Activated B cell treated with CpG ODN at 0.5 μM for 24 hours (primary cell): ENCODE measurements at regions of chr11 and their contacts with region 1.

Region 1: DNA sequence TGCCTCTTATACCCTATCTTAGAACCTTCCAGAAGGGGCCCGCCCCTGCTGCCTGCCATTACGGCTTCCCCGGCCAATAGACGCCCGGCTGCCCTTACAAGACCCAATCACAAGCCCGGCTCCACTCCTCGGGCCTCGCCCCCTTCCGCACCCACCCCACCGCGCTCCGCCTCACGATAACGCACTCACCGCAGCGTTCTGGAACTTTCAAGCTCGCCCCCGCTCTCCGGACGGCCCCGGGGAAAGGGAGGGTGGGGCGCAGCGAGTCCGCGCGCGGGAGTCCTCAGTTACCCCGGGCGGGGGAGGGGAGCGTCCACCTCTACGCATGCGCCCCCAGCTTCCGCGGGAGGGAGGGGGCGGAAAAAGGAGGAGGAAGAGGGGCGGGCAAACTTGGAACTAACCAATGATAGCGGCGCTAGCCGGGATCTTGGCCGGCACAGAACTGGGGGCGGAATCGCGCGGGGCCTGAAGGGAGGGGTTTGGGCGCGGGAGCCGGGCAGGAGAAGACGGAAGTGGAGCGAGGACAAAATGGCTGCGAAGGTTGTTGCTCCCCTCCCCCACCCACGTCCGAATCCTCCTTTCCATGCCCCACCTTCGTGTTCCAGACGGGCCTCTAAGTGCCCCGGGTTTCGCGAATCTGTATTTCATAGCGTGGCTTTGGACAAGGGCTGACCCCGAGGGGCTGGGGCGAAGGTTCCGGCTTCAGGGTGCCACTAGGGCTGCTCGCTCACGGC is 389 bp upstream of the HSPA8 start:
- DNase-seq: peak; percentile 98
- ATAC-seq: peak; percentile 82
- H3K4me3 Mint-ChIP-seq: peak overlapping the region; percentile 97
- H3K27ac Mint-ChIP-seq: peak overlapping the region; percentile 100
- H3K4me1 Mint-ChIP-seq: peaks cover 69% of the 10 kb centered on the region
- H3K27me3 Mint-ChIP-seq: no peaks in the 10 kb centered on the region
- CTCF ChIP-seq: no peak

Region 2: DNA sequence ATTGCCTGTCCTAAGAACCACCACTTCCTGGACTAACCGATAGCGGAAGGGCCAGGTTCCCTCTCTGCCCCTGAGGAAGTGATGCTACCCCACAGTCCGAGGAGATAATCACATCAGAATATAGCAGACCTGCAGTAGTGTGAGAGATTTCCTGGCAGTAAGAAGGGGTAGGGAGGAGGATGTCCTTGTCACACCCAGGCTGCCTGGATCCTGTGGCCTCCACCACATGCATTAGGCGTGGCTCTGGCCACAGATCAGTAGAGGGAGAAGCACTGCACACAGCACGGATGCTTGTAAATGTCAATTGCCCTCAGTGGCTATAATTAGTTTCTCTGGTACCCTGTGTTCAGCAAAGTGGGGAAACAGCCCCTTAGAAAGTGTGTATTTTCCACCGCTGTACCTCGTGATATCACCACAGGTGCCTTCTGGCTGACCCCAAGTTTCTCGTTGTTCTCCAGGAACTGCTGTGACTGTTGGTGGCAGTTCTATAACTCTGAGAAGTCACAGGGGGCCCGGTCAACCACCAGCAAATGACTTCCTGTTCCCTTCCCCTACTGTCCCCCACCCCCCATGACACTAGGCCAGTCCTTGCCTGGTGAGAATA is 345.0 kb before region 1 on chr11:
- CTCF ChIA-PET with region 1: no interaction called
- POLR2A ChIA-PET with region 1: interaction called, 7 read pairs
- intact Hi-C with region 1: loop called (anchors 10 kb)
- DNase-seq: peak; percentile 38
- ATAC-seq: peak; percentile 69
- H3K4me3 Mint-ChIP-seq: peak overlapping the region; percentile 47
- H3K27ac Mint-ChIP-seq: peak overlapping the region; percentile 80
- H3K4me1 Mint-ChIP-seq: peaks cover 83% of the 10 kb centered on the region
- H3K27me3 Mint-ChIP-seq: peaks cover 2% of the 10 kb centered on the region
- CTCF ChIP-seq: no peak

Region 3: GRCh38 chr11:122743949-122744348 is 318.4 kb before region 1 on chr11:
- CTCF ChIA-PET with region 1: no interaction called
- POLR2A ChIA-PET with region 1: interaction called, 14 read pairs
- intact Hi-C with region 1: loop called (anchors 2 kb)
- DNase-seq: peak; percentile 51
- ATAC-seq: peak; percentile 51
- H3K4me3 Mint-ChIP-seq: no peak overlapping the region
- H3K27ac Mint-ChIP-seq: no peak overlapping the region
- H3K4me1 Mint-ChIP-seq: peaks cover 12% of the 10 kb centered on the region
- H3K27me3 Mint-ChIP-seq: no peaks in the 10 kb centered on the region
- CTCF ChIP-seq: no peak

Region 4: GRCh38 chr11:122882857-122883645 is 179.3 kb before region 1 on chr11:
- CTCF ChIA-PET with region 1: no interaction called
- POLR2A ChIA-PET with region 1: interaction called, 6 read pairs
- intact Hi-C with region 1: loop called (anchors 2 kb)
- DNase-seq: peak; percentile 54
- ATAC-seq: peak; percentile 73
- H3K4me3 Mint-ChIP-seq: peak overlapping the region; percentile 85
- H3K27ac Mint-ChIP-seq: peak overlapping the region; percentile 59
- H3K4me1 Mint-ChIP-seq: peaks cover 10% of the 10 kb centered on the region
- H3K27me3 Mint-ChIP-seq: peaks cover 16% of the 10 kb centered on the region
- CTCF ChIP-seq: no peak

Region 5: DNA sequence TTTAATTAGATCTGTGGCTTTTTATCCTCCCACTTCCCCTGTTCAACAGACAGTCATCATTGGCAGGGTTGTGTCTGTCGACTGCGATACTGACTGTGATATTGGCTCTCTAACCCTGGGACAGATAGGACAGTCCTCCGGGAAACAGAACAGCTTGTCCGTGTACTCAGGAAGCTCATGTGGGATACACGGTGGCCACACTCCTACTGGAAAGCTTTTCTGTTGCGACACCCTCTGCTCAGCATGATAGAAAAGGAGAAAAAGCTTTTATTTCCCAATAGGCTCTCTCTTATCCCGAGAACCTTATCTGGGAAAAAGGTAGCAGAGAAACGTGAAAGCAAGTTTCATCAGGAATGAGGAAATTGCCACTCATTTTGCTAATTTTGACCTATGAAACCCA is 60.0 kb after region 1 on chr11:
- CTCF ChIA-PET with region 1: no interaction called
- POLR2A ChIA-PET with region 1: no interaction called
- intact Hi-C with region 1: no loop called
- DNase-seq: no peak
- ATAC-seq: no peak
- H3K4me3 Mint-ChIP-seq: no peak overlapping the region
- H3K27ac Mint-ChIP-seq: no peak overlapping the region
- H3K4me1 Mint-ChIP-seq: no peaks in the 10 kb centered on the region
- H3K27me3 Mint-ChIP-seq: peaks cover 19% of the 10 kb centered on the region
- CTCF ChIP-seq: no peak

Region 6: GRCh38 chr11:123741159-123742028 is 679.1 kb after region 1 on chr11 and contains the start of gene ZNF202:
- CTCF ChIA-PET with region 1: no interaction called
- POLR2A ChIA-PET with region 1: interaction called, 5 read pairs
- intact Hi-C with region 1: loop called (anchors 1 kb)
- DNase-seq: peak; percentile 91
- ATAC-seq: peak; percentile 92
- H3K4me3 Mint-ChIP-seq: peak within 1 kb of the TSS; percentile 88
- H3K27ac Mint-ChIP-seq: peak within 1 kb of the TSS; percentile 90
- H3K4me1 Mint-ChIP-seq: peaks cover 30% of the 10 kb centered on the region
- H3K27me3 Mint-ChIP-seq: peaks cover 6% of the 10 kb centered on the region
- CTCF ChIP-seq: no peak
- total RNA-seq, gene ZNF202: 23.3 and 27.8 TPM in 2 replicates

Region 7: DNA sequence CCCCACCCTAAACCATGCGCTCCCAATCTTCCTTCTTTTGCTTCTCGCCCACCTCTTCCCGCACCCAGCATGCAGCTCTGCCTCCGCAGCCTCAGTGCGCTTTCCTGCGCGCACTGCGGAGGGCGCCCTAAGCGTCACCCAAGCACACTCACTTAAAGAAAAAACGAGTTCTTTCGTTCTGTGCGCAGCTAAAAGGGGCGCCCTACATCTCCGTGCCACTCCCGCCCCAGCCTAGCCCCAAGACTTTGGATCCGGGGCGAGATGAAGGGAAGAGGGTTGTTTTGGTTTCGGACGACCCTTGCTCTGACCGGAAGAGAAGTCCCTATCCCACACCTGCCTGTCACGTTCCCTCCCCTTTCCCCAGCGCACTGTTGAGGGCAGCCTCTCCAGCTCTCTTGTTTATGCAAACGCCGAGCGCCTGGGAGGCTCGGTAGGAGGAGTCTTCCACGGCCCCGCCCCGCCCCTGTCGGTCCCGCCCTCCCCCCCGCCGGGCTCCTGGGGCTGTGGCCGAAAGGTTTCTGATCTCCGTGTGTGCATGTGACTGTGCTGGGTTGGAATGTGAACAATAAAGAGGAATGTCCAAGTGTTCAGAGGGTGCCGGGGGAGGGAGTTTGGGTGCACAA is 1684.4 kb after region 1 on chr11:
- CTCF ChIA-PET with region 1: no interaction called
- POLR2A ChIA-PET with region 1: no interaction called
- intact Hi-C with region 1: loop called (anchors 5 kb)
- DNase-seq: peak; percentile 73
- ATAC-seq: peak; percentile 89
- H3K4me3 Mint-ChIP-seq: peak overlapping the region; percentile 97
- H3K27ac Mint-ChIP-seq: peak overlapping the region; percentile 93
- H3K4me1 Mint-ChIP-seq: peaks cover 37% of the 10 kb centered on the region
- H3K27me3 Mint-ChIP-seq: peaks cover 2% of the 10 kb centered on the region
- CTCF ChIP-seq: no peak